Mammary epithelial cell (primary cell): ENCODE measurements at regions of chr3 and their contacts with region 1.

Region 1: DNA sequence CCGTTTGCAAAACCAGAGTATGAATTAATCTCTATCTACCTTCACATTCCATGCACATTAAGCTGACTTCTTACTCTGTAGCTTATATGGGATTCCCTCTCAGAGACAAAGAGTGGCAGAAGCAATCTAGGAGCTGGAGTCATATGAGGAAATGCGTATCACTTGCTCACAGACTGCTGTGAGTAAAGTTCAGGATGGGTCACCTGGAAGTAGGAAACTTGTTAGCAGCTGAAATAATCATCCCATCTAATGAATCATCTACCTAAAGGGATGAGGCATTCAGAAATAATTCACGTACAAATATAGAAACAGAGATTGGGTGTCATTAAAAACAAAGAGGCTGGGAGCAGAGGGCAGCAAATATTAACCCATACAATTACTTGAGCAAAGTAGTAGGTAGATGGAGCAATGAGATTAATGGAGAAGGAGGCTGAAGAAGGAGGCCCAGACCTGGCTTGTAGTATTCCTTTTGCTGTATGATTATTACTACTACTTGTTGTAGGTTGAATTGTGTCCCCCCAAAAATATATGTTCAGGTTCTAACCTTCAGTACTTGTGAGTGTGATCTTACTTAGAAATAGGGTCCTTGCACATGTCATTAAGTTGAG is 866.3 kb downstream of the ROBO2 start:
- DNase-seq: peak; percentile 96
- H3K4me3 ChIP-seq: no peak overlapping the region
- H3K27ac ChIP-seq: peak overlapping the region; percentile 48
- H3K4me1 ChIP-seq: peaks cover 8% of the 10 kb centered on the region
- H3K27me3 ChIP-seq: no peaks in the 10 kb centered on the region
- CTCF ChIP-seq: no peak

Region 2: DNA sequence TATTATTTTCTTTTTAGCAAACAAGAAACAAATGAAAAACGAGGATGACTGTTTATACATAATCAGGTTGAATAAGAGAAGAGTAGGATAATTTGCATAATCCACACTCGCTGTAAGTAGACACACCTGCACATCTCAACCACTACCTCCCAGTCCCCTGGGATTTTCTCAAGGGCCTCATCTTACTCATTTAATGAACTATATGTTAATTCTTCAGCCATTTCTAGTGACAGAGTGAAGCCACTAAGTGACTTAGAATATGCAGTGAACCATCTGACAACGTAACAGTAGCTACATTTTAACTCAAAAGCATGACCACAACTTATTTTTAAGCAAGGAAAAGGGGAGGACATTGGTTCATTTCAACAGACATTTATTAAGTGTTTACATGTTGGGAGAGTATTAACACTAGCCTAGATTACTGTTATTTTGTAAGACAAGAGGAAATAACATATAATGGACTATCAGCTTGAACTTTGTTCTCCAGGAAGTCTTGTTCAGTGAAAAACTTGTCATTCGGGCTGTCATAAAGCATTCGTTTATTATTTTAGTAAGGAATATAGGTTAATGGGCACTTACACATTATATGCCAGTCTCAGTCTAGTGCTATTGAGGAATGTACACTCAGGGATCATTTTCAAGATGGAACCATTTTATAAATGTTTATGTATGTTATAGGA is 1039.3 kb before region 1 on chr3:
- CTCF ChIA-PET with region 1: no interaction called
- dilution Hi-C with region 1: no loop called
- in situ Hi-C with region 1: no loop called
- intact Hi-C with region 1: no loop called
- DNase-seq: no peak
- H3K4me3 ChIP-seq: no peak overlapping the region
- H3K27ac ChIP-seq: no peak overlapping the region
- H3K4me1 ChIP-seq: no peaks in the 10 kb centered on the region
- H3K27me3 ChIP-seq: no peaks in the 10 kb centered on the region
- CTCF ChIP-seq: no peak

Region 3: DNA sequence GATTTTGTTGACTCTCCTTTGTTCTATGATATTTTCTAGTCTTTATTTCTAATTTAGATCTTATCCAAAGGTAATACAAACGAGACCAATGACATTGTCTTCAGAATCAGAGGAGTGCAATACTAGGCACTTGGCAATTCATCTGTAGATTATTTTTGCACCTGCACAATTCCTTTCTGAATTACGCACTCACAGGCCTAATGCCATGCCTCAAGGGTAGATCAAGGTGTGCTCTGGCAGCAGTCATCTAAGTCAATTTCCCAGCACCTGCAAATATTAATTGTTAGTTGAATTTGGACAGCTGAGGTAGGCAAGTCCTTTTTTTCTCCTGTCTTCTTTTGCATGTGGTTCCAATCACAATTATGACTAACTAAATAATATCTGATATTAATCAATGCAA is 213.1 kb before region 1 on chr3:
- CTCF ChIA-PET with region 1: no interaction called
- dilution Hi-C with region 1: no loop called
- in situ Hi-C with region 1: no loop called
- intact Hi-C with region 1: no loop called
- DNase-seq: no peak
- H3K4me3 ChIP-seq: no peak overlapping the region
- H3K27ac ChIP-seq: no peak overlapping the region
- H3K4me1 ChIP-seq: no peaks in the 10 kb centered on the region
- H3K27me3 ChIP-seq: no peaks in the 10 kb centered on the region
- CTCF ChIP-seq: no peak

Region 4: GRCh38 chr3:77793225-77793624 is 113.0 kb before region 1 on chr3:
- CTCF ChIA-PET with region 1: no interaction called
- dilution Hi-C with region 1: no loop called
- in situ Hi-C with region 1: no loop called
- intact Hi-C with region 1: no loop called
- DNase-seq: no peak
- H3K4me3 ChIP-seq: no peak overlapping the region
- H3K27ac ChIP-seq: no peak overlapping the region
- H3K4me1 ChIP-seq: no peaks in the 10 kb centered on the region
- H3K27me3 ChIP-seq: peaks cover 3% of the 10 kb centered on the region
- CTCF ChIP-seq: no peak

Region 5: DNA sequence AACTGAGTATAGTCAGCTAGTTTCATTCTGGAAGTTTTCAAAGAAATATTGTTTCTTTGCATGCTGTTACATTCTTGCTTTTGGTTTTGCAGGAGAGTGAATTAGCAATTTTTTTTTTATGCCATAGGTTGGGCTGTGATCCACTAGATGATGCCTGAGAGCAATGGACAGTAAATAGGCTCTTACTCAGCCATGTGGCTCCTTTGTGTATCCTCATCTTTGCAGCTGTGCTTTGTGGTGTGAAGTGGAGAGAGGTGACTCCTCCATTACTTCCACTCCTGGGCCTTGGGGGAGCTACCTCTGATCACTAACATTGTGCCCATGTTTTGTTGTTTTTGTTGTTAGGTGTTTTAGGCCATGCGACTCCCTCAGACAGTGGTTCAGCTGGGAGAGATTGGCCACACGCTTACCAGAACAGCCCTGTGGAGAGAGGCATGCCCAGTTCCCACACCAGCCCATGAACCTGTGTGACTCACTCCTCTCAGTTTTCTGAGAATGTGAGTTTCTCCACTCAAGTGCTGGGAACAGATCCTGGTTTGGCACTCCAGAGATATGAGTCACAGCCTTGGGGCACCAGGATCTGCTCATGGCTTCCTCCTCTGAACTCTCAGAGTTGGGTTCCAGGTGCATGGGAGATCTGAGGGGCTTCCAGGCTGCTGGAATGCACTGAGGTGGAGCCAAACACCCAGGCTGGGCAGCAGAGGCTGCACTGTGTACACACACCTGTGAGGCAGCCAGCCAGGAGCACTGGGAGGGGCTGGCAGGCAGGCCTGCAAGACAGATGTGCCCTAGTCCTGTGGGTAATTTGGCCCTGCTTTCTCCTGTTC is 81.0 kb before region 1 on chr3:
- CTCF ChIA-PET with region 1: no interaction called
- dilution Hi-C with region 1: no loop called
- in situ Hi-C with region 1: no loop called
- intact Hi-C with region 1: loop called (anchors 2 kb)
- DNase-seq: peak; percentile 99
- H3K4me3 ChIP-seq: no peak overlapping the region
- H3K27ac ChIP-seq: peak overlapping the region; percentile 77
- H3K4me1 ChIP-seq: peaks cover 16% of the 10 kb centered on the region
- H3K27me3 ChIP-seq: no peaks in the 10 kb centered on the region
- CTCF ChIP-seq: peak in 1 of 2 donors; percentile 24

Region 6: DNA sequence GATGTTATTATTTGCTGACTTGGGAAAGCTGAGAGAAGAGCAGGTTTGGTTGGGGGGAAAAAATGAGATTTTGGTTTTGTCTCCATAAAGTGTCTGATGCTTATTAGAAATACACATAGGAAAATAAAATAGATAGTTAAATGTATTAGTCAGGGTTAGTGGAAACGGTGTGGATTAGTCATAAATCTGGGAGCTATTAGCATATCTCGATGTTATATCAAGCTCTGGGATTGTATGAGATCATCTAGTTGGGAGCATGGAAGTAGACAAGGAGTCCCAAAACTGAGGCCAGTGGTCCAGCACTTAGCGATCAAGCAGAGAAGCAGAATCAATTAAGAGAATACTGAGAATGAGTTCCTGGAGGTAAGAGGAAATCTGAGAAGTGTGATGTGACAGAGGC is 20.8 kb before region 1 on chr3:
- CTCF ChIA-PET with region 1: interaction called, 12 read pairs
- dilution Hi-C with region 1: no loop called
- in situ Hi-C with region 1: no loop called
- intact Hi-C with region 1: no loop called
- DNase-seq: no peak
- H3K4me3 ChIP-seq: no peak overlapping the region
- H3K27ac ChIP-seq: no peak overlapping the region
- H3K4me1 ChIP-seq: no peaks in the 10 kb centered on the region
- H3K27me3 ChIP-seq: no peaks in the 10 kb centered on the region
- CTCF ChIP-seq: no peak

Region 7: DNA sequence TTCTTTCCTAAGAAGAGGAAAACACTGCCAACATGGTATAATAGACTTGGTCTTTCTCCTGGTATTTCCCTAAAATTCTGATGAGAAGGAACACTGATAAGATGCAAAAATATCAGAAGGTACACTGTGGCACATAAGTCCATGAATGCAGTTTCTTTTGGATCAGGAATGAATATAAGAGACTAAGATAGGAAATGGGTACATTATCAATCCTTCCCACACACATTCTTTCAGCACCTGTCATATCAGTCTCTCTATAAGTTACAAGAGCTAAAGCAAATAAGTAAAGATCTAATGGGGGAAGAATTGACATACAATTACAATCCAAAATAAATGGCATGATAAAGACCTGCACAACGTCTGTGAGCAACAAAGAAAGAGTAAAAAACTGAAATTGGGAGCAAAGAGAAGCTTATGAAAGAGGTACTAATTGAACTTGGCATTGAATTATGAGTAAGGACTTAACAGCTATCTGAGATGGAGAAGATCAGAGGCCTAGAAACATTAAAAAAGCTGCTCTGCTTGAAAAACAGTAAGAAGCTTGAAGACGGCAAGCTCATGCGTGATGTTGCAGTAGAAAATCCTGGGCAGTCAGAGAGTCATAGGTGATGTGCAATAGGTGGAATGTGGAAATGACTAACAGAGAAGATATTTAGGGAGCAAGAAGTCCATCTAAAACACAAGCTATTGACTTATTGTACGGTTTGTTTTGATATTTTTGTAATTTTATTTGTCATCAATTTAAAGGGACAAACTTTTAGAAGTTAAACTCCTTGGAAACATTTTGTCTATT is 234.9 kb after region 1 on chr3:
- CTCF ChIA-PET with region 1: no interaction called
- dilution Hi-C with region 1: no loop called
- in situ Hi-C with region 1: no loop called
- intact Hi-C with region 1: loop called (anchors 10 kb)
- DNase-seq: peak; percentile 77
- H3K4me3 ChIP-seq: no peak overlapping the region
- H3K27ac ChIP-seq: peak overlapping the region; percentile 75
- H3K4me1 ChIP-seq: peaks cover 30% of the 10 kb centered on the region
- H3K27me3 ChIP-seq: no peaks in the 10 kb centered on the region
- CTCF ChIP-seq: no peak